ENCODE measurements at regions of chr11 and their contacts with region 1.

Region 1: DNA sequence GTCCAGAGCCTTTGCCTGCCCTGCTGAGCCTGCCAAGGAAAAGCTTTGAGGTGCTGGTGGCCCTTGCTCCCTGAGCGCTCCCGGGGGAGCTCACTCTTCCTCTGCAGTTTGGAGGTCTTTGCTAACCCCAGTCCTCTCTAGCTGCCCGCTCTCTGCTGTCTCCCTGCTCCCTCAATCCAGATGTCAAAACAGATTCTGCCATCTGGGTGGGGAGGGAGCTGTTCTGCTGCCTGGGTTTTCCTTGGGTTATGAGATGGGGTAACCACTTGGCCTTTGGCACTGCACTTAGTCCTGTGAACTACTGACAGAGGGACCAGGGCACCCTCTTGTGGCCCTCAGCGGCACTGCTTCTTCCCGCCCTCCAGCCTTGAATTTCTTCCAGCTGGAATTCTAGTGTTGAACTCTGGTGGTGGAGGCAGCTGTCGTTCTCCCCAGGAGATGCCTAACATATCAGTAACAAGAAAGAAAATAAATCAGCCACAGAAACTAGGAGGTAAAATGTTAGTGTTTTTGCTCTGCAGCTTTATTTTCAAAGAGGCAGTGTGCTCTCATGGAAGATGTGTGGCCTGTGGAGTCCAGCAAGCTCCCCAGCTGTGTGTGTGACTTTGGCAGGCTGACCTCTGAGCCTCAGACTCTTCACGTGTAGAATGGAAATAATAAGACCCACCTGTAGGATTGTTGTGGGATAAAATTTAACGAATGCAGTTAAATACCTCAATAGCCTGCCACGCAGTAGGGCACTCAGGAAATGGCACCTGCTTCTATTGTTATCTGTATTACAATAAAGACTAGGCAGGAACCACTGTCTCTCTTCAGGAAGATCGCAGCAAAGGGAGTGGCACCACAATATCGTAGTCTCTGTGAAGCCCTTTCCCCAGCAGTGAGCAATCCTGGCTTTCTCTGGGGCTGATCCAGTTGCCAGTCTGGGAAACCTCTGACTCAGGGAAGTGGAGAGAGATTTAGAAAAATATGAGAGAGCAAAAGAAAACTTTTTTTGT is 23.4 kb downstream of the ARFGAP2 start:
- DNase-seq: peak; percentile 84
- CTCF ChIP-seq: peak; percentile 96

Region 2: GRCh38 chr11:46700241-46701077 is 452.8 kb before region 1 on chr11 and contains the starts of genes ARHGAP1 and ZNF408:
- in situ Hi-C with region 1: no loop called
- DNase-seq: peak; percentile 94
- CTCF ChIP-seq: no peak

Region 3: DNA sequence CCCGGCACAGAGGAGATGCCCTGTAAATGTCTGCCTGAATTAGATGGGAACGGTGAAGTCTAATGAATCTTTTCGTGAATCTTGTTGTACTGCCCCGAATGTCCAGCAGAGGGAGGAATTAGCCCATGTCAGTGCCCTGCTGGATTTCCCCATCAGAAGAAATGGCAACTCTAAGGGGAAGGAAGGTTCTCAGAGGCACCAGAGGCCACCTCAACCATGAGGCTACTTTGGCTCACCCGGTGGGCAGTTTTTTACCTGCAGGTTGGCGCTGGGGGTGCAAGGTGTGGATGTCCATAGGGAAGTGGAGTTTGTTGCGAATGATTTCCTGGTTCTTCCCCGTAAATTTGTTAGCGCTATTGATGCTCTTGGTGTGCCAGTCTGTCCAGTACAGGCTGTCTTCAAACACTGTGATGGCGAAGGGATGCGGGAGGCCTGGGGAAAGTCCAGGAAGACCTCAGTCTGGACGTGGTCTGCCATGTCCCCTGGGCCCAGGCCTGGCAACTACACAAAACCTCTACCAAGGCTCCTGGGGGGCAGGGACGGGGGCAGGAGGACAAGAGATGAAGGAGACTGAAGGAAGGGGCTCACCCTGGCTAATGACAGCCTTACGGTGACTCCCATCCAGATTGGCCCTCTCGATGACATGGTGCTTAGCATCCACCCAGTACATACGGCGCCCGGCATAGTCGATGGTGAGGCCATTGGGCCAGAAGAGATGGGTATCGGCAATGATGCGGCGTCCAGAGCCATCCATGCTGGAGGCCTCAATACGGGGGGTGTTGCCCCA is 263.4 kb before region 1 on chr11:
- in situ Hi-C with region 1: loop called (anchors 10 kb)
- DNase-seq: peak; percentile 84
- CTCF ChIP-seq: peak; percentile 89

Region 4: DNA sequence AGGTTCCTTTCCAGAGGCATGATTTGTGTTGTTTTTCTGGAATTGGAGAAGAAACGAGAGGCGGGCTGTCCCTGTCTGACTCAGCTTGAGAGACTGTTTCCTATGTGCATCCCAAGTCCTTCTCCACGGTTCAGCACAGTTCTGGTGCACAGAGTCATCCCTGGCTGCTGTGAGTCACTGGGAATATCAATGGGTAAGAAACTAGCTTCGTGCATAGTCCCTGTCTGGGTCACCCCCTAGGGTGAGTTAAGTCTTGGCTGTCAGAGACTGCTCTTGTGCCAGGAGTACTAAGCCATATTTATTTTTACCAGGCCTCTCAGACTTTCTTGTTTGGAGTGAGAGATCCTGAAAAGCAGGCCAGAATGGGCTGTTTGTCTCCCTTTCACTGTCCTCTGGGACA is 232.5 kb before region 1 on chr11:
- in situ Hi-C with region 1: loop called (anchors 10 kb)
- DNase-seq: no peak
- CTCF ChIP-seq: no peak